ENCODE measurements at regions of chr6 and their contacts with region 1.

Region 1: GRCh38 chr6:15245361-15246216 is at the start of gene JARID2:
- DNase-seq: peak; percentile 97
- ATAC-seq: peak; percentile 81
- H3K4me3 ChIP-seq: peak within 1 kb of the TSS; percentile 94 to 99 (median 96)
- H3K27ac ChIP-seq: peak within 1 kb of the TSS; percentile 93
- H3K4me1 ChIP-seq: peaks cover 37% of the 10 kb centered on the region
- H3K27me3 ChIP-seq: peaks cover 0 to 15% of the 10 kb centered on the region in 2 experiments; a peak in 3 of 5 replicates
- CTCF ChIP-seq: 0 out of 2 replicates have a peak, but pooled peaks have one; percentile 3
- EP300 ChIP-seq: no peak
- POLR2A ChIP-seq: peak; percentile 73 to 76
- RAD21 ChIP-seq: peak; percentile 44; the same call in 1 of the 2 replicates
- total RNA-seq, gene JARID2: 10.0 and 10.3 TPM in 2 replicates

Region 2: GRCh38 chr6:14210663-14211561 is 1034.7 kb before region 1 on chr6:
- CTCF ChIA-PET with region 1: no interaction called
- POLR2A ChIA-PET with region 1: no interaction called
- in situ Hi-C with region 1: loop called (anchors 25 kb)
- intact Hi-C with region 1: loop called (anchors 10 kb)
- DNase-seq: peak; percentile 74
- ATAC-seq: peak; percentile 91
- H3K4me3 ChIP-seq: peak overlapping the region; percentile 56 to 80 (median 58)
- H3K27ac ChIP-seq: no peak overlapping the region
- H3K4me1 ChIP-seq: peaks cover 31% of the 10 kb centered on the region
- H3K27me3 ChIP-seq: peaks cover 0 to 21% of the 10 kb centered on the region in 2 experiments; a peak in 3 of 5 replicates
- CTCF ChIP-seq: peak; percentile 75
- EP300 ChIP-seq: peak in 1 of 2 experiments; percentile 87; a peak in 2 of 4 replicates
- POLR2A ChIP-seq: peak in 1 of 2 experiments; percentile 53; a peak in 1 of 4 replicates
- RAD21 ChIP-seq: peak; percentile 99

Region 3: DNA sequence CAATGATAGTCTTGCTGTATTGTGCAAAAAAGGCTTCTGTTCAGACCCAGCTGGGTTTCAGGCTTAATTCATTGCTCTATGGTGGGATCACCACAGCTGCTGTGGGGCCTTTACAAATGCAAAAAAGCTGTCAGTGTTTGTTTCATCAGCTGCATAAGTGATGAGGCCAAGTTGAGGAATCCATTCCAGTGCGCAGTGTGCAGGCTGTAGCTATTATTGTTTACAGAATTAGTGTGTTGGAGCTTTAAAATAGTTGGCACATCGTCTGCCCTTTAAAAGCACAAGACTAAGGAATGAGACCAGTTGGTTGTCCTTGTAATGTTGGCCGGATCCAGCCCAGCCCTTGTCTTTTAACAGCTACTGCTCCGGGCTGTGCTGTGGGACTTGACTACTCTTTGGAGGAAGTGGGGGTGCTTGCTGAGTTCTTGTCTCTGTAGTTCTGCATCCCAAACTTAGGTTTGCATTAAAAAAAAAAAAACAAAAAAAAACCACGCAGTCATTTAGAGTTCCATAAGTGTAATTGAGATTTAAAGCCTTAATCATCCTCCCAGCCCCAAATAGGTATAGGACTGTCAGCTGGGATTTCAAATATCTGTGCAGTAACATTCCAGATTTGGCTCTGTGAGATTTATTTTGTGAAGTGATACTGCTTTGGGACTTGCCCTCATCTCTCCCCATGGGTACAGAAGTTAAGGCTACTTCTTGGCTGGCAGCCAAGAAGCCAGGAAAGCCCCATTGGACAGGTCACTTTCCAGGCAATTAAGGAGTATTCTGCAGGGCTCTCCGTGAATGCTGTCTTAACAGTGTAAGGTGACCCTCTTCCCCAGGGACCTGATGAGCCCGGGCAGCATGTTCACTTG is 19.5 kb after region 1 on chr6:
- CTCF ChIA-PET with region 1: no interaction called
- POLR2A ChIA-PET with region 1: interaction called, 18 read pairs
- in situ Hi-C with region 1: no loop called
- intact Hi-C with region 1: loop called (anchors 2 kb)
- DNase-seq: no peak
- ATAC-seq: peak; percentile 10
- H3K4me3 ChIP-seq: no peak overlapping the region
- H3K27ac ChIP-seq: peak overlapping the region; percentile 76
- H3K4me1 ChIP-seq: peaks cover 64% of the 10 kb centered on the region
- H3K27me3 ChIP-seq: no peaks in the 10 kb centered on the region
- CTCF ChIP-seq: no peak
- EP300 ChIP-seq: no peak
- POLR2A ChIP-seq: no peak
- RAD21 ChIP-seq: no peak

Region 4: GRCh38 chr6:15389765-15390723 is 144.5 kb after region 1 on chr6:
- CTCF ChIA-PET with region 1: no interaction called
- POLR2A ChIA-PET with region 1: no interaction called
- in situ Hi-C with region 1: no loop called
- intact Hi-C with region 1: loop called (anchors 2 kb)
- DNase-seq: peak; percentile 60
- ATAC-seq: peak; percentile 89
- H3K4me3 ChIP-seq: no peak overlapping the region
- H3K27ac ChIP-seq: no peak overlapping the region
- H3K4me1 ChIP-seq: no peaks in the 10 kb centered on the region
- H3K27me3 ChIP-seq: no peaks in the 10 kb centered on the region
- CTCF ChIP-seq: peak; percentile 93
- EP300 ChIP-seq: no peak
- POLR2A ChIP-seq: no peak
- RAD21 ChIP-seq: peak; percentile 89

Region 5: GRCh38 chr6:15491255-15491985 is 245.8 kb after region 1 on chr6:
- CTCF ChIA-PET with region 1: no interaction called
- POLR2A ChIA-PET with region 1: no interaction called
- in situ Hi-C with region 1: no loop called
- intact Hi-C with region 1: loop called (anchors 2 kb)
- DNase-seq: peak; percentile 94
- ATAC-seq: peak; percentile 92
- H3K4me3 ChIP-seq: no peak overlapping the region
- H3K27ac ChIP-seq: no peak overlapping the region
- H3K4me1 ChIP-seq: peaks cover 28% of the 10 kb centered on the region
- H3K27me3 ChIP-seq: no peaks in the 10 kb centered on the region
- CTCF ChIP-seq: peak; percentile 91
- EP300 ChIP-seq: peak in 1 of 2 experiments; percentile 59; a peak in 1 of 4 replicates
- POLR2A ChIP-seq: no peak
- RAD21 ChIP-seq: peak; percentile 80